Upper lobe of right lung (tissue), 1 donor: ENCODE measurements at regions of chr15 and their contacts with region 1.

Region 1: DNA sequence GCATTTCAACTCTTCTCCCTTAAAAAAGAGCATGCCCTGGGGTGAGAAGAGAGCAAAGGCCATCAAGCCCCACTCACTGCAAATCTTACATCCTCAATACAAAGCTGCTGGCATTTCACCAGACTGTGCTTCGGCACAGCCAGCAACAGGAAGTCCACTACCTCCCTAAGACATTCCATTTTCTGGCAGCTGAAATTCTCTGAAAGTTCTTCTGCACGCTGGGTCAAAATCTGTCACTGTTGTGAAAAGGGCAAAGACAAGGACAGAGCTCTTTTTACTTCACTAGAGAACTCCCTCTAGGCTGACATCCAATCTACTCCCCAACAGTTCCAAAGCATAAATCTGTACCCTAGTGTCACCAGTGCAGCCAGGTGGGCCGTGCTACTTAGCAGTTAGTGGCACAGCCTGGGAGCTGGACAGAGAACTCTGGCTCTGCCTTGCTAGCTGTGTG is 6.3 kb downstream of the MTMR10 start:
- DNase-seq: no peak
- ATAC-seq: peak; percentile 67
- H3K4me3 ChIP-seq: no peak overlapping the region
- H3K27ac ChIP-seq: peak overlapping the region; percentile 51
- H3K4me1 ChIP-seq: peaks cover 43% of the 10 kb centered on the region
- H3K27me3 ChIP-seq: no peaks in the 10 kb centered on the region
- CTCF ChIP-seq: no peak

Region 2: GRCh38 chr15:30889196-30889595 is 95.9 kb before region 1 on chr15:
- intact Hi-C with region 1: no loop called
- DNase-seq: no peak
- ATAC-seq: no peak
- H3K4me3 ChIP-seq: no peak overlapping the region
- H3K27ac ChIP-seq: no peak overlapping the region
- H3K4me1 ChIP-seq: no peaks in the 10 kb centered on the region
- H3K27me3 ChIP-seq: no peaks in the 10 kb centered on the region
- CTCF ChIP-seq: no peak

Region 3: DNA sequence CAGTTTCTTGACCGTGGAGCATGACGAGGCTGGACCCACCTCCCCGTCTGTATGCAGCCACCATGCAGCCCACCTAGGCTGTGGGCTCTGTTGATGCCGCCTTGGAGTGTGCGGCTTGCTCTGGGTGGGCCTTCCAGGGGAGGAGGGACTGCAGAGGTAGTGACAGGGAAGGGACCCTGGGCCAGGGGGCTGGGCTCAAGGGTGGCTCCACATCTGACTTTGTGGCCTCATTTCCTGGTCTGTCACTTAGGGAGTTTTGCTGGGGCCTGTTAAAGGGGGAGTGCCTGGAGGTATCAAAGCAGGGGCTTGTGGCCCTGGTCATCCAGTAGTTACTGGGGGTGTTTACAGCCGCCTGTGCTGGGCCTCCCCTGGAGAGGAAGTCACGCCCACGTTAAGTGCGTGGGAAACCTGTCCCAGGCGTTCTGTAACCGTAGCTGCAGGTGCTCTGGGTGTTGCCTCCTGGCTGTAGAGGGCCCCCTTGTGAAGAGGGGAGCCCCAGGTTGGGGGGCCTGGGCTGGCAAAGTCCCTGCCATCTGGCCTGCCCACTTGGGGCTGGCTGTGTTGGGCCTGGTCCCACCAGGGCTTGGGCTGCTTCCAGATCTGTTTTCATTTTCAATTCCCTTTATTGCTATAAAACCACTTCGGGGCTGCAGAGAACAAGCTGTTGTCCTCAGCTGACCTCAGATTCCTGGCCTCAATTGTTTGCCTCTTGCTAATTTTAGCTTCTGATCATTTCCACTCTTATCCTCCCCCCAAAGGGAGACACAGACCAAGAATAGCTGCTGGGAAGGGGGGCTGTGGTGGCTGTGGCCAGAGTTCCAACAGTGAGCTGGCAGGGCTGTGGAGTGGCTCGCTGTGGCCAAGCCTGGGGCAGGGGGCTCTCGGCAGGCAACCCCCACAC is 368.1 kb after region 1 on chr15:
- intact Hi-C with region 1: loop called (anchors 10 kb)
- DNase-seq: peak; percentile 84
- ATAC-seq: peak; percentile 63
- H3K4me3 ChIP-seq: peak overlapping the region; percentile 30
- H3K27ac ChIP-seq: peak overlapping the region; percentile 87
- H3K4me1 ChIP-seq: peaks cover 100% of the 10 kb centered on the region
- H3K27me3 ChIP-seq: no peaks in the 10 kb centered on the region
- CTCF ChIP-seq: no peak